Endothelial cell of umbilical vein (primary cell): ENCODE measurements at regions of chr15 and their contacts with region 1.

Region 1: DNA sequence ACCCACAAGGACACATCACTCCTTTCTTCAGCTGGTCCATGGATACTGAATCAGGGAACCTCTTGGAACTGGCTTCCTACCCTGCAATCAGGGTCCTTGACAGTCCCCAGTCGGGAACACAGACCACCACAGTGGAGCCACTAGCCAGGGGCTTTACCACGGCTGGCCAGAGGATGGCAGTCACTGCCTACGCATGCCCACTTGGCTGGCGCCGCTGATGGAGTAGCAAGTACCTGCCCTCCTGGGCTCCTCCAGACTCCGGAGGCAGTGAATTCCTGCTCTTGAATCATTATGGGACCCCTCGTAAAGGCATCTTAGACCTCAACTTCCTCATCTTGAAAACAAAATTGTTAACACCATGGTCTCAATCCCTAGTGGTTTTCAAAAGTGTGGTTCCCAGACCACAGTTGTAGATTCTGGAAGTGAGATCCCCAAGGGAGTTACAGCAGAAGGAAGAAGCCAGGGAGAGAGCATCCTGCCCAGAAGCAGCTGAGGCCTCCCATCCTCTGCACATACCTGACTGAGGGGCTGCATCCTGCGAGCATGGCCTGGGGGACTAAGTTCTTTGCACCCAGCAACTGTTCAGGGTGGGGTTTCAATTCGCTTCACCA is 9.1 kb upstream of the SKIC8 start:
- DNase-seq: peak; percentile 73
- H3K4me3 ChIP-seq: no peak overlapping the region
- H3K27ac ChIP-seq: no peak overlapping the region
- H3K4me1 ChIP-seq: peaks cover 3% of the 10 kb centered on the region
- H3K27me3 ChIP-seq: no peaks in the 10 kb centered on the region
- CTCF ChIP-seq: peak; percentile 97
- POLR2A ChIP-seq: no peak

Region 2: DNA sequence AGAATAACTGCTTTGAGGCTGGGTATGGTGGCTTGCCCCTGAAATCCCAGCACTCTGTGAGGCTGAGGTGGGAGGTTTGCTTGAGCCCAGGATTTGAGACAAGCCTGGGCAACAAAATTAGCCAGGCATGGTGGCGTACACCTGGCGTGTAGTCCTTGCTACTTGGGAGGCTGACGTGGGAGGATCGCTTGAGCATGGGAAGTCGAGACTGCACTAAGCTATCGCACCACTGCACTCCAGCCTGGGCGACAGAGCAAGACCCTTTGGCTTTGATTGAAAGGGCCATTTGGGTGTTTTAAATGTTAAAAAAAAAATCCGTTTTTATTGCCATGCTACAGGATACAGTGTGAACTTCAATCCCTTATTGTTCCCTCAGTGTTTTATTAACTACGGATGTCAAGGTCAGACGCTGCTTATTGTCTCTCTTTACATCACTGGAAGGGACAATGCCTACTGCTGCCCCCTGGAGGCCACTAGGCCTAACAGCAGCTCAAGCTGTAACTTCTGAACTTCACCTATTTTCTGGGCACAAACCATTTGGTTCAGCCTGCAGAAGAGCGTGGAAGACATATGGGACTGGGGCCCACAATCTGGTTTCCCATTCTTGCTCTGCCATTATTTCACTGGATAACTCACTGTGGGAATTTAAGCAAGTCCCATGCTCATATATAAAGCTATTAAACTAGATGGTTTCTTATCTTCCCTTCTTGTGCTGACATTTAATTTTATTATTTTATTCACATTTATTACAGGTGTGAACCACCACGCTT is 114.2 kb after region 1 on chr15:
- CTCF ChIA-PET with region 1: interaction called, 367 read pairs
- POLR2A ChIA-PET with region 1: interaction called, 3 read pairs
- dilution Hi-C with region 1: no loop called
- intact Hi-C with region 1: loop called (anchors 1 kb)
- DNase-seq: peak; percentile 71
- H3K4me3 ChIP-seq: no peak overlapping the region
- H3K27ac ChIP-seq: no peak overlapping the region
- H3K4me1 ChIP-seq: no peaks in the 10 kb centered on the region
- H3K27me3 ChIP-seq: peaks cover 9% of the 10 kb centered on the region in 2 experiments
- CTCF ChIP-seq: peak; percentile 91
- POLR2A ChIP-seq: no peak

Region 3: DNA sequence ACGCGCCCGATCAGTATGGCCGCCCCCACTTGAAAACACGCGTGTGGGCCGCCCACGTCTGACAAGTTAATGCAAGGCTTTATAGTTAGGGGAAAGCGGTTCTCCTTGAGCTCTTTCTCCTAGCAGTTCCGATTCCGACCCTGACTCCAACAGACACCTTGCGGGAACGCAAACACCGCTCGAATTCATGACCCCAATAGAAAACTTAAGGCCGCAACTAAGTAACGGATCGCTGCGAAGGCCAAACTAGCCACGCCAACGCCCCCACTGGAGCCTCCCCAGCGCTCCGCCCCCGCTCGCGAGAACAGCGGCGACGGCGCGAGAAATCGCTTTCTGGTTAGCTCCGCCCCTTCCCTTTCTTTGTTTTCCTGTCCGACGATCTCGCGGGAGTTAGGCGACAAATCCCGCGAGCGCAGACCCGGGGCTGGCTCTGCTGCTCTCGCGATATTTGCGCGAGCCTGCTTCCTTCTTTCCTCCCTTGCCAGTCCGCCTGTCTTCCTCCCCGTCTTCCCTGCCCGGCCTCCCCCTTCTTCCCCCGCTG is 129.3 kb after region 1 on chr15 and contains the start of gene IREB2:
- CTCF ChIA-PET with region 1: interaction called, 8 read pairs
- POLR2A ChIA-PET with region 1: no interaction called
- dilution Hi-C with region 1: no loop called
- intact Hi-C with region 1: loop called (anchors 1 kb)
- DNase-seq: peak; percentile 100
- H3K4me3 ChIP-seq: peak within 1 kb of the TSS; percentile 75 to 99 (median 93)
- H3K27ac ChIP-seq: peak within 1 kb of the TSS; percentile 84
- H3K4me1 ChIP-seq: peaks cover 17% of the 10 kb centered on the region
- H3K27me3 ChIP-seq: peaks cover 0 to 5% of the 10 kb centered on the region in 2 experiments
- CTCF ChIP-seq: no peak
- POLR2A ChIP-seq: peak; percentile 98
- total RNA-seq, gene IREB2: 51.4 and 54.3 TPM in 2 replicates

Region 4: GRCh38 chr15:78618490-78618934 is 310.0 kb after region 1 on chr15:
- CTCF ChIA-PET with region 1: no interaction called
- POLR2A ChIA-PET with region 1: no interaction called
- dilution Hi-C with region 1: no loop called
- intact Hi-C with region 1: loop called (anchors 5 kb)
- DNase-seq: peak; percentile 73
- H3K4me3 ChIP-seq: no peak overlapping the region
- H3K27ac ChIP-seq: no peak overlapping the region
- H3K4me1 ChIP-seq: no peaks in the 10 kb centered on the region
- H3K27me3 ChIP-seq: peaks cover 30 to 49% of the 10 kb centered on the region in 2 experiments
- CTCF ChIP-seq: peak; percentile 73 to 76
- POLR2A ChIP-seq: no peak